SK-N-SH (cell line): ENCODE measurements at regions of chr10 and their contacts with region 1.

Region 1: DNA sequence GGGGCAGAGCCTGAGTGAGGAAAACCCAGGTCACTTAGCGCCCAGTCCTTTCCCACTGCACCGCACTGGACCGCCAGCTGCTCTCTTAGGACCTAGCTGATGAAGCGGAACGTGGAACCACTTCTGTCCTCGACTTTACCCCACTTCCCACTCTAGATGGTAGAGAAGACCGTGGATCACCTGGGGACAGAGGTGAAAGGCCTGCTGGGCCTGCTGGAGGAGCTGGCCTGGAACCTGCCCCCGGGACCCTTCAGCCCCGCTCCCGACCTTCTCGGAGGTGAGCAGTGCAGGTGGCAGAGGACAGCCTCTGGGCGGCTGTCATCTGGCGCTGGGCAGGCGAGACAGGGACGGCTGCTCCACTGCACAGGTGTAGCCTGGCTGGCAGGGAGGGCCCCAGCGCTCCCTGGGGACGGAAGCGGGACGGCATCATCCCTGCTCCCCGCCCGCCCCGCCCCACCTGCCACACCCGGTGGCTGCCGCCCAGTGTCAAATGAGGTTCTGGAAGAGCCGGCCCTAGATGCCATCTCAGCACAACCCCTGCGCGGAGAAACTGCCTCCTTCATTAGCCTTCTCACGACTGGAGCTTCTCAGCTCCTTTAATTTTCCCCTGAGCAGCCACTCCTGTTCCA is 11.7 kb downstream of the PLAC9 start:
- DNase-seq: peak; percentile 46
- H3K4me3 ChIP-seq: peak overlapping the region; percentile 23 to 35; a peak in 3 of 4 replicates
- H3K27ac ChIP-seq: no peak overlapping the region
- H3K4me1 ChIP-seq: peaks cover 4 to 9% of the 10 kb centered on the region in 2 experiments; a peak in 2 of 4 replicates
- H3K27me3 ChIP-seq: no peaks in the 10 kb centered on the region
- CTCF ChIP-seq: no peak; the same call in 1 of the 2 replicates
- EP300 ChIP-seq: no peak
- RAD21 ChIP-seq: no peak

Region 2: GRCh38 chr10:80132299-80133139 is 11.7 kb before region 1 on chr10 and contains the start of gene PLAC9:
- CTCF ChIA-PET with region 1: interaction called, 16 read pairs
- POLR2A ChIA-PET with region 1: no interaction called
- DNase-seq: peak; percentile 83
- H3K4me3 ChIP-seq: peak within 1 kb of the TSS; percentile 42 to 60
- H3K27ac ChIP-seq: no peak within 1 kb of the TSS
- H3K4me1 ChIP-seq: no peaks in the 10 kb centered on the region; a peak in 1 of 4 replicates
- H3K27me3 ChIP-seq: peaks cover 23% of the 10 kb centered on the region; the same call in 1 of the 2 replicates
- CTCF ChIP-seq: no peak
- EP300 ChIP-seq: no peak
- RAD21 ChIP-seq: no peak
- polyA plus RNA-seq, gene PLAC9: 0.21 TPM in 1 of 2 replicates, not detected in the other

Region 3: DNA sequence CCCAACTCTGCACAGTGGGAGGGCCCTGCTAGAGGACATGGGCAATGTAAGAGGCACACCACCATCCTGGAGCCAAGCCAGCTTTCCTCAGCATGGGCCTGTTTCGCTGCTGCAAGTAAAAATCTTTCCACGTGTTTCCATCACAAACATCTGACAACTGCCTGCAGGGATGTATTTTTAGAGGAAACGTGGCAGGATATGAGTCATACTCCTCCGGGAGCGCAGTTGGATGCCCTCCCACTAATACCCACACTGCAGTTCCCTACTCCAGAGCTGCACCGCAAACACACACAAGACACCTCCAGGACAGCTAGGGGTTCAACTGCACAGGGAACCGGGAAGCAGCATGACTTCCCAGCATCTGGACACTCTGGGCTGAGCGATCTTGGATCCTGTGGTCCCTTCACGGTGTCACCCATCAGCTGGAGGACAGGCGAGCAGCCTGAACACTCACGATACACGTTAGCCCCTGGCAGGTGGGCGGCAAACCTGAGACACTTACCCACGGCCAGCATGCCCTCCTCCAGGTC is 14.5 kb after region 1 on chr10:
- CTCF ChIA-PET with region 1: interaction called, 28 read pairs
- POLR2A ChIA-PET with region 1: no interaction called
- DNase-seq: peak; percentile 62
- H3K4me3 ChIP-seq: no peak overlapping the region
- H3K27ac ChIP-seq: peak overlapping the region; percentile 85 to 88
- H3K4me1 ChIP-seq: peaks cover 23 to 43% of the 10 kb centered on the region in 2 experiments; a peak in 3 of 4 replicates
- H3K27me3 ChIP-seq: no peaks in the 10 kb centered on the region
- CTCF ChIP-seq: no peak
- EP300 ChIP-seq: peak in 1 of 2 experiments; percentile 90
- RAD21 ChIP-seq: no peak

Region 4: GRCh38 chr10:80168679-80169380 is 24.6 kb after region 1 on chr10:
- CTCF ChIA-PET with region 1: interaction called, 10 read pairs
- POLR2A ChIA-PET with region 1: no interaction called
- DNase-seq: no peak
- H3K4me3 ChIP-seq: no peak overlapping the region
- H3K27ac ChIP-seq: no peak overlapping the region
- H3K4me1 ChIP-seq: peaks cover 0 to 22% of the 10 kb centered on the region in 2 experiments; a peak in 2 of 4 replicates
- H3K27me3 ChIP-seq: no peaks in the 10 kb centered on the region
- CTCF ChIP-seq: no peak
- EP300 ChIP-seq: no peak
- RAD21 ChIP-seq: no peak

Region 5: GRCh38 chr10:80211786-80212185 is 67.6 kb after region 1 on chr10:
- CTCF ChIA-PET with region 1: interaction called, 14 read pairs
- POLR2A ChIA-PET with region 1: no interaction called
- DNase-seq: no peak
- H3K4me3 ChIP-seq: no peak overlapping the region
- H3K27ac ChIP-seq: no peak overlapping the region
- H3K4me1 ChIP-seq: no peaks in the 10 kb centered on the region
- H3K27me3 ChIP-seq: no peaks in the 10 kb centered on the region
- CTCF ChIP-seq: no peak
- EP300 ChIP-seq: no peak
- RAD21 ChIP-seq: no peak

Region 6: GRCh38 chr10:80260295-80261243 is 116.4 kb after region 1 on chr10:
- CTCF ChIA-PET with region 1: interaction called, 17 read pairs
- POLR2A ChIA-PET with region 1: no interaction called
- DNase-seq: peak; percentile 74
- H3K4me3 ChIP-seq: peak overlapping the region in 1 of 2 experiments; percentile 39; a peak in 1 of 4 replicates
- H3K27ac ChIP-seq: no peak overlapping the region
- H3K4me1 ChIP-seq: no peaks in the 10 kb centered on the region
- H3K27me3 ChIP-seq: no peaks in the 10 kb centered on the region; the same call in 1 of the 2 replicates
- CTCF ChIP-seq: peak; percentile 88
- EP300 ChIP-seq: no peak
- RAD21 ChIP-seq: peak; percentile 68

Region 7: DNA sequence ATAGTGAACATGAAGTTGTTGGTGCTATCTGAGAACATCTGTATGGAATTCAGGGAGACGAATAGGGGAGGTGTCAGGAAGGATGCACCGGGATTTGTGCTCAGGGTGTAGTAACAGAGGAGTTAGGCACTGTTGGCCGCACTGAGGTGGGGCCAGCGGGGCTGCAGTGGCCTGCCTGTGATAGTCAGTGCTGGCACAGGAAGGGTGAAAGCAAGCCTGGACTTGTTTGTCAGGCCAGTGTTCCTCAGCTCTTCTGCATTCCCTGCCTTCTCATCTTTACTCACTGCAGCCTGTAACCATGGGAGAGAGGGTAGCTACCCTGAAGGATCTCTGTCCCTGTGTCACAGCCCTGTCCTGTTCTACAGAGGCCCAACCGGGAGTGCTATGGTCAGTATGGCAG is 474.9 kb after region 1 on chr10:
- CTCF ChIA-PET with region 1: no interaction called
- POLR2A ChIA-PET with region 1: no interaction called
- DNase-seq: no peak
- H3K4me3 ChIP-seq: no peak overlapping the region
- H3K27ac ChIP-seq: no peak overlapping the region
- H3K4me1 ChIP-seq: no peaks in the 10 kb centered on the region
- H3K27me3 ChIP-seq: no peaks in the 10 kb centered on the region
- CTCF ChIP-seq: no peak
- EP300 ChIP-seq: no peak
- RAD21 ChIP-seq: no peak